AG04450 (cell line): ENCODE measurements at regions of chr16 and their contacts with region 1.

Region 1: GRCh38 chr16:12794486-12795387 is 8.9 kb downstream of the CPPED1 start:
- DNase-seq: no peak
- H3K4me3 ChIP-seq: no peak overlapping the region
- H3K27ac ChIP-seq: no peak overlapping the region
- H3K27me3 ChIP-seq: no peaks in the 10 kb centered on the region
- CTCF ChIP-seq: no peak

Region 2: GRCh38 chr16:12447556-12447955 is 347.2 kb before region 1 on chr16:
- CTCF ChIA-PET with region 1: no interaction called
- POLR2A ChIA-PET with region 1: no interaction called
- DNase-seq: no peak
- H3K4me3 ChIP-seq: no peak overlapping the region
- H3K27ac ChIP-seq: no peak overlapping the region
- H3K27me3 ChIP-seq: peaks cover 2% of the 10 kb centered on the region
- CTCF ChIP-seq: no peak

Region 3: DNA sequence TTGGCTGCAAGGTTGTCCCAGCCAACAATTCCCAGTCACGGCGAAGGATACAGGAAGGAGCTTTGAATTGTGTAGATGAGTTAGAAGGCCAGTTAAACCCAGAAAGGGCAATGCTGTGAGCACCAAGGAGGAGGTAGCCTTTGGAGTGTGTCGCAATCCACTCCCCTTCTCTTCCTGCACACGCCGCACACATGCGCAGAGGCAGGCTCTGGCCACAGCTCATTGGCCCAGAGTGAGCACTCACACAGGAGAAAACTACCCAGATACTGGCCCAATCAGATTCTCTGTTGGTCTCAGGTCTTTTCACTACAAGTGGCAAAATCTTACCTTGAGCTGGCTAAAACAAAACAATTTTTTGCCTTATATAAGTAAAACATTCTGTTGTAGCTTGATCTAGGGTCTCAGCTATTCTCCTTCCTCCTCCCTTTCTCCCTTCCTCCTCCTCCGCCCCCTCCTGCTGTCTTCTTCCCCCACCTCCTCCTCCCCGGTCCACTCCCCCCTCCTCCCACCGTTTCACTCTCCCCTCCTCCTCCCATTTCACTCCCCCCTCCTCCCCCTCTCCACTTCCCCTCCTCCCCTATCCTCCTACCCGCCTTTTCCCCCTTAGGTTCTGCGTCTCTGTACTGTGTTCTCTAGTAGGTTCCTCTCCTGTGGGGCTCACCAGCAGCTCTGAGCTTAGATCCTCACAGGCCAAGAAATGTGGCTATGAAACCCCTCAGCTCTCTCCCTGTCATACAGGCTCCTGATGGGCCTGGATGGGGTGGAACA is 336.0 kb before region 1 on chr16:
- CTCF ChIA-PET with region 1: interaction called, 10 read pairs
- POLR2A ChIA-PET with region 1: no interaction called
- DNase-seq: no peak
- H3K4me3 ChIP-seq: no peak overlapping the region
- H3K27ac ChIP-seq: peak overlapping the region; percentile 21
- H3K27me3 ChIP-seq: no peaks in the 10 kb centered on the region
- CTCF ChIP-seq: no peak

Region 4: GRCh38 chr16:13077816-13078215 is 283.1 kb after region 1 on chr16:
- CTCF ChIA-PET with region 1: no interaction called
- POLR2A ChIA-PET with region 1: no interaction called
- DNase-seq: no peak
- H3K4me3 ChIP-seq: no peak overlapping the region
- H3K27ac ChIP-seq: no peak overlapping the region
- H3K27me3 ChIP-seq: no peaks in the 10 kb centered on the region
- CTCF ChIP-seq: no peak